IMR-90 (cell line): ENCODE measurements at regions of chr3 and their contacts with region 1.

Region 1: DNA sequence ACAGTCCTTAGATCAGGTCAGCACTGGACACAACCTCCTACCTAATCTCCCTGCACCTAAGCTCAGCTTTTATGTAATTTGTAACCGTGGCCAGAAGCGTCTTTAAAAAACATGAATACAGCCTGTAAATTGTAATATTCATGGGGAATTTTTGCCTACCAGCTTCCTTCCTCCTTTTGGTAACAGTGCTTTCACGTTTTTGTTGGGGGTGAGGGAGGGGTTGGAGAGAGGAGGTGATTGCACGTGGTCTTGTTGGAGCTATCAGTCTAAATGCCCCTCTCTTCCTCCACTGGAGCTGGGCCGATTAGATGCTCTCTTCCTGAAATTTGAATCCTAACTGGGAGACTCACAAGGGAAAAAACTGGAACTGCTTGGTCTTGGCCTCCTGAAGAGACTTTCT is 35.1 kb upstream of the SCN5A start:
- DNase-seq: no peak
- ATAC-seq: no peak
- H3K4me3 ChIP-seq: no peak overlapping the region
- H3K27ac ChIP-seq: no peak overlapping the region
- H3K4me1 ChIP-seq: no peaks in the 10 kb centered on the region
- H3K27me3 ChIP-seq: peaks cover 12% of the 10 kb centered on the region
- CTCF ChIP-seq: no peak
- POLR2A ChIP-seq: no peak
- RAD21 ChIP-seq: no peak

Region 2: GRCh38 chr3:38782148-38782547 is 97.6 kb after region 1 on chr3:
- CTCF ChIA-PET with region 1: no interaction called
- POLR2A ChIA-PET with region 1: no interaction called
- dilution Hi-C with region 1: no loop called
- in situ Hi-C with region 1: no loop called
- intact Hi-C with region 1: loop called (anchors 5 kb)
- DNase-seq: no peak
- ATAC-seq: no peak
- H3K4me3 ChIP-seq: no peak overlapping the region
- H3K27ac ChIP-seq: no peak overlapping the region
- H3K4me1 ChIP-seq: no peaks in the 10 kb centered on the region
- H3K27me3 ChIP-seq: no peaks in the 10 kb centered on the region
- CTCF ChIP-seq: no peak
- POLR2A ChIP-seq: no peak
- RAD21 ChIP-seq: no peak